ENCODE measurements at regions of chr5 and their contacts with region 1.

Region 1: GRCh38 chr5:81506900-81507588 is 113.1 kb upstream of the ACOT12 start:
- DNase-seq: peak in 4 of 5 donors; percentile 46 to 71 (median 56)
- ATAC-seq: peak; percentile 98 to 100 (median 99)
- H3K4me3 ChIP-seq: peak overlapping the region in 1 of 12 donors; percentile 3
- H3K27ac ChIP-seq: peak overlapping the region in 10 of 12 donors; percentile 17 to 68 (median 40)
- H3K4me1 ChIP-seq: peaks cover 0 to 25% (median 16%) of the 10 kb centered on the region in 12 donors
- H3K27me3 ChIP-seq: no peaks in the 10 kb centered on the region
- CTCF ChIP-seq: peak; percentile 76 to 98 (median 84)
- POLR2A ChIP-seq: no peak

Region 2: GRCh38 chr5:81751009-81751835 is 244.2 kb after region 1 on chr5 and contains the start of gene SSBP2:
- intact Hi-C with region 1: loop called (anchors 1 to 5 kb)
- DNase-seq: peak; percentile 99 to 100 (median 99)
- ATAC-seq: peak; percentile 95 to 99 (median 98)
- H3K4me3 ChIP-seq: peak within 1 kb of the TSS; percentile 76 to 98 (median 82)
- H3K27ac ChIP-seq: peak within 1 kb of the TSS; percentile 94 to 100 (median 99)
- H3K4me1 ChIP-seq: peaks cover under 1 to 48% (median 29%) of the 10 kb centered on the region in 12 donors
- H3K27me3 ChIP-seq: no peaks in the 10 kb centered on the region
- CTCF ChIP-seq: peak in 1 of 12 donors; percentile 22
- POLR2A ChIP-seq: peak in 1 of 2 donors; percentile 72
- total RNA-seq, gene SSBP2: 38.6 to 98.1 (median 50.7) TPM

Region 3: DNA sequence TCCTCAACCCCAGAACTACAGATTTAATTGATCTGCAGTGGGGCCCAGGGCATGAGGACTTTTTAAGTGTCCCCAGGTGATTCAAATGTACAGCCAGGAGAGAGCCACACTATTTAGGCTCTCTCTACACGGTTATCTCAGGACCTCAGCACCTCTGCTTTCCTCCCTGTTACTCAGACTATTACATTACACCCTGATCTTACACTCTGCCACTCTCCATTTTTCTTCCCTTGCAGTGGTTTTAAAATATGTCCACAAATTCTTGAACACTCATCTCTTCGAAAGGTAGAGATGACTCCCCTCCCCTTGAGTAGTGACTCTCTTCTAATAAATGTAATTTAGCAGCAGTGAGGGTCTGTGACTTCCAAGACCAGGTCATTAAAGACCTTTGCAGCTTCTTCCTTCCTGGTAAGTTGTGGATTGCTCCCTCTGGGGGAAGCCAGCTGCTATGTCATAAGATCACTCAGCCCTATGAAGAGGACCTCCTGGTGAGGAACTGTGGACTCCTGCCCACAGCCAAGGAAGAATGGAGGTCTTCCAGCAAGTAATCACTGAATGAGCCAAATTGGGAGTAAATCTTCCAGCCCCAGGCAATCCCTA is 331.4 kb after region 1 on chr5:
- intact Hi-C with region 1: loop called in 1 of 10 experiments (anchors 5 kb)
- DNase-seq: no peak
- ATAC-seq: peak; percentile 26 to 71 (median 70)
- H3K4me3 ChIP-seq: no peak overlapping the region
- H3K27ac ChIP-seq: no peak overlapping the region
- H3K4me1 ChIP-seq: peaks cover 0 to 16% (median 3%) of the 10 kb centered on the region in 12 donors
- H3K27me3 ChIP-seq: no peaks in the 10 kb centered on the region
- CTCF ChIP-seq: peak in 10 of 12 donors; percentile 25 to 62 (median 48)
- POLR2A ChIP-seq: no peak

Region 4: DNA sequence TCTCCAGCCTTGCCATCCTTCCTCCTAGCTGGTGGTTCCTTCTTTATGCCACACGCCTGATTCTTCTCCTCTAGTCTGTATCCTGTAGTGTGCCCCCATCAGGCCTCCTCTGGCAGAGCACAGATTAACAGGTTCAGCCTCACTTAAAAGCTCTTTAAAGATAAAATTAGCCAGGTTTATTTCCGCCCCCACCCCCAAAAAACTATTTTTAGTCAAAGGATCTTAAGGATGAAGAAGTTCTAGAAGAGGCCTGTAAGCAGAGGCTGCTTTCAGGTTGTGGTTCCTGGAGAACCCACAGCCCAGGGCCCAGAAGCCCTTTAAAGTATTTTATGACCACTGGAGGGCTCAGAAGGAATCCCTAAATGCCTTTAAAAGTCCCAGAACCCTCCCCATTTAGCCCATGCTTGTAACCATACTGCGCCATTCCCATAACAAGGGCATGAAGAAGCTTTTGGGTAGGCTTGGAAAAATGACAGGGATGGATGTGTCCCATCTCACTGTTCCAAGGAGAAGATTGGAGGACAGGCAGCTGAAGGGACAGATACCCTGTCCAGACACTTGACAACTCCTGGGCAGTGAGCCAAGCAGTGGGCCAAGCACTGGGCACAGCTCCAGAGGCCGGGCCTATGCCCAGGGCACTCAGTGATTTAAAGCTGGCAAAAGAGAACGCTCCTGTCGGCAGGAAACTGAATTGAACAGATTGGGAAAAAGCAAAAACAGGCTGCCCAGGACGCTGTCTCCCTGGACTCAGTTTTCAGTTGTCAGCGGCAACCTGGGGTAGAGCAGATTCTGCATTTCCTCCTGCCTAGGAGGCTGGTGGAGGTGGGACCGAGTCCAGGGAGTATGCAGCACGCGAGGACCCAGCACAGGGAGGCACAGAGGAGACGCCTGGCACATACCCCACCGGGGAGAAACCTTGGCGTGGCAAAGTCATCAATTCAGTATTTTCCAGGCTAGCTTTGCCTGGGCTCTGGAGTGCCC is 350.2 kb after region 1 on chr5:
- intact Hi-C with region 1: loop called in 8 of 10 experiments (anchors 2 to 10 kb)
- DNase-seq: peak; percentile 86 to 94 (median 88)
- ATAC-seq: peak; percentile 95 to 96 (median 96)
- H3K4me3 ChIP-seq: peak overlapping the region in 6 of 12 donors; percentile 9 to 37 (median 24)
- H3K27ac ChIP-seq: peak overlapping the region; percentile 64 to 90 (median 74)
- H3K4me1 ChIP-seq: peaks cover 0 to 55% (median 22%) of the 10 kb centered on the region in 12 donors
- H3K27me3 ChIP-seq: no peaks in the 10 kb centered on the region
- CTCF ChIP-seq: peak in 10 of 12 donors; percentile 4 to 48 (median 23)
- POLR2A ChIP-seq: no peak

Region 5: DNA sequence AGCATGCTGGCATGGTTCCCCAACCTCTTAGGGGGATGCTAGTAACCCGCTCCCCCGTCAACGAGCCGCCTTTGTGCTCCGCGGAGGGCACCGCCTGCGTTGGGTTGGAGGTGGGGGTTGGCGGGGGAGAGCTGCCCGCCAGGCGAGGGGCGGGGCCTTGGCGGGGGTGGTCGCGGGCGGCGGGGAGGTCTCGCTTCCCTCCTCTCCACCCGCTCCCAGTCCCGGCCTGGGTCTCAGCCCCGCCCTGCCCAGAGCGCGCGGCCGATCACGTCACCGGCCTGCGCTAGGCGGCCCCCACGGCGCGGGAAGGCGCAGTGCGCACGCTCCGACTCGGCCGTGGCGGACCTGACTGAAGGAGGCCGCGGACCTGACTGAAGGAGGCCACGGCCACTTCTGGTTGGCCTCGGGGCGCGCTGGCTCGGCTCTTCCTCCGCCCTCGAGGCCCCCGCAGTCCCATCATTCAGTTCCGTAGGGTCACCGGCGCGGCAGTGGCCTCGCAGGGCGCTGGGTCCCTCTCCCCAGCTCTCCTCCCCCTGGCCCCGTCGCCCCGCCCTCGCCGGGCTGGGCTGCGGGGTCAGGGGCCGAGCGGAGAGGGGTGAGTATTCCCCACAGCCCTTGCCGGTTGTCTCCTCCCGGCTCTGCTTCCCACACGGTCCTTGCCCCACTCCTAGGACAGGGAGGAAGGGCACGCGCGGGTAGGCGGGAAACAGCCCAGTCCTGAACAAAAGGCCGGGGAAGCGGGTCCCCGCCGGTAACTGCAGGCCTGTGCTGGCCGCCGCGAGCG is 464.9 kb after region 1 on chr5 and contains the start of gene ATG10:
- intact Hi-C with region 1: loop called in 6 of 10 experiments (anchors 5 to 10 kb)
- DNase-seq: peak; percentile 93 to 97 (median 94)
- ATAC-seq: peak; percentile 96 to 100 (median 99)
- H3K4me3 ChIP-seq: peak within 1 kb of the TSS; percentile 57 to 92 (median 73)
- H3K27ac ChIP-seq: peak within 1 kb of the TSS; percentile 91 to 100 (median 98)
- H3K4me1 ChIP-seq: peaks cover 0 to 15% (median 6%) of the 10 kb centered on the region in 12 donors
- H3K27me3 ChIP-seq: no peaks in the 10 kb centered on the region
- CTCF ChIP-seq: no peak
- POLR2A ChIP-seq: peak; percentile 70 to 98
- total RNA-seq, gene ATG10: 2.7 to 10.7 (median 6.3) TPM

Region 6: DNA sequence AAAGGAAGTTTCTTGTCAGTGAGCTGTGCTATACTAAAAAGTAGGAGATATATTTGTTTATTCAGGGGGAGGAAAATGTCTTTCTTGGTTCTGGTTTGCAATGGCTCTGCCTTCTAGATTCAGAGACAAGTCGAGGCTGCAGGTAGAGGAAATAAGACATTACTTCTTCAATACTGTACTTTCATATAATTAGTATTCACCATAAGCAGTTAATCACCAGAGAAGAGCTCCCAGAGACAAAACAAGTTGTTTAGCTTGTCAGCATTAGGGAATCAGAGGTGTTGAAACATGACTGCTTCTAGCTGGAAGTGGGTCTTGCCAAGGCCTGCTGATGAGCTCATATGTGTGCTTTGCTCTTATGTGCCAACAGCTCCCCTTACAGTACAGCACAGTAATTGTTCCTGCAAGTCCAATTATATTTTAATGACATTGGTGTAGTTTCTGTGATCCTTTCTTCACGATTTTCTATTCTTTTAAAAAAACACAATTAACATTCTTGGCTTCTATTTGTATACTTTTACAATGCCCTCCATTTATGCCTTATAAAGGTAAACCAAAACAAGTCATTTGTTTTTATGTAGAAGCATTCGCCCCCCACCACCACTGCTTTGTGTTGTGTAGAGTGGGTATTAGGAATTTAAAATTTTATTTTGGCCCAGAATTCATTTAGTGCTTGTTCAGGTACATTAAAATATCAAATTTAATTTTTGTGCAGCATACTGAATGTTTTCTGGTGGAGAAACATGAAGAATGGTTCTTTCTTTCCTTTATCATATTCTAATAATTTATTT is 658.9 kb after region 1 on chr5:
- intact Hi-C with region 1: loop called (anchors 2 to 10 kb)
- DNase-seq: peak in 4 of 5 donors; percentile 64 to 81 (median 78)
- ATAC-seq: peak; percentile 98 to 100 (median 100)
- H3K4me3 ChIP-seq: no peak overlapping the region
- H3K27ac ChIP-seq: peak overlapping the region in 10 of 12 donors; percentile 5 to 55 (median 38)
- H3K4me1 ChIP-seq: peaks cover 0 to 26% (median 12%) of the 10 kb centered on the region in 12 donors
- H3K27me3 ChIP-seq: no peaks in the 10 kb centered on the region
- CTCF ChIP-seq: peak; percentile 53 to 87 (median 76)
- POLR2A ChIP-seq: no peak